Mammary epithelial cell (primary cell): ENCODE measurements at regions of chr1 and their contacts with region 1.

Region 1: DNA sequence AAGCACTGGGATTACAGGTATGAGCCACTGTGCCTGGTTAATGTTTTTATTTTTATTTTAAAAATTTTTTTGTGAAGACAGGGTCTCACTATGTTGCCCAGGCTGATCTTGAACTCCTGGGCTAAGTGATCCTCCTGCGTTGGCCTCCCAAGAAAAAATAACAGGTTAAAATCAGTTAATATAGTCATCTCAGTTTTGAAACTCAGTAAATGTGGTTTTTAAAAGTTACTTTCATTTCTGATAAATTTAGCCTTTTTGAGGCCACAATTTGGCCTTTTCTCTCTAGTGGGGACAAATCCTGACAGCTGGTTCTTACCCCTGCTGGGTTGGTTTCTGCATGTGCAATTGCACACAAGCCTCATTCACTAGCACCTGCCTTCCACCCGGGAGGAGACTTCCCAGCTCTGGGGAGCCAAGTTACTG is 13.3 kb downstream of the PMF1 start:
- DNase-seq: no peak
- H3K4me3 ChIP-seq: no peak overlapping the region
- H3K27ac ChIP-seq: no peak overlapping the region
- H3K4me1 ChIP-seq: peaks cover 12% of the 10 kb centered on the region
- H3K27me3 ChIP-seq: no peaks in the 10 kb centered on the region
- CTCF ChIP-seq: no peak

Region 2: DNA sequence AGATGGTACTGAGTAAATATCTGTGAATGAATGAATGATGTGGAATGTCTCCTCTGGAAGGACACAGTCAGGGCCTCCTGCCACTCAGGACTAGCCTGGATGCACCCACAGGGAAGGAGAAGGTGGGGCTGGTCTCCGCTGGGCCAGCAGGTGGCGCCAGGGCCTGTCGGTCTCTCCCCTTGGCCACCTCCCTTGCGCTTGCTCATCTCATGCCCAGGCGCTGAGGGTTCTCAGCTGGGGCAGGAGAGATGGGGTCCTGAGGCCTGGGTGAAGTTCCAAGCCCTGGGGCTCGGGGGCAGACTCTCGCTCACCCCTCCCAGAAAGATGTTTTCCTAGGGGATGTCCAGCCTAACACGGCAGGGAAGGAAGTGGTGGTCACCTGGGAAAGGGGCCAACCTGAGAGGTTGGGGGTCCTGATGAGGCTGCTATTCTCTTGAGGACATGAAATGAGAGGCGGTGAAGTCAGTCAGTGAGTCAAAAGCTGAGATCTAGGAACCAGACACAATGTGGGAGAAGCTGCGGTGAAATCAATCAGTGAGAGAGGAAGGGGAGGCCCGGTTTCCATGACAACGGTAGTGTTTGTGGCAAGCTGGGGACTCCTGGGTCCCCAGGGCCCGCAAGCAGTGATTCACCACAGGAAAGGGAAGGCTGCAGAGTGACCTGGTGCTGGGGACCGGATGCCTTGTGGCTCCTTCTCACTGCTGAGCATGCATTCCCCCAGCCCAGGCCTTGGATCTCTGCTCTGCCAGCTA is 129.3 kb before region 1 on chr1:
- CTCF ChIA-PET with region 1: interaction called, 6 read pairs
- dilution Hi-C with region 1: loop called (anchors 5 kb)
- in situ Hi-C with region 1: loop called (anchors 5 kb)
- intact Hi-C with region 1: loop called (anchors 1 kb)
- DNase-seq: peak; percentile 77
- H3K4me3 ChIP-seq: no peak overlapping the region
- H3K27ac ChIP-seq: peak overlapping the region; percentile 49
- H3K4me1 ChIP-seq: peaks cover 33% of the 10 kb centered on the region
- H3K27me3 ChIP-seq: no peaks in the 10 kb centered on the region
- CTCF ChIP-seq: peak; percentile 96 to 100

Region 3: DNA sequence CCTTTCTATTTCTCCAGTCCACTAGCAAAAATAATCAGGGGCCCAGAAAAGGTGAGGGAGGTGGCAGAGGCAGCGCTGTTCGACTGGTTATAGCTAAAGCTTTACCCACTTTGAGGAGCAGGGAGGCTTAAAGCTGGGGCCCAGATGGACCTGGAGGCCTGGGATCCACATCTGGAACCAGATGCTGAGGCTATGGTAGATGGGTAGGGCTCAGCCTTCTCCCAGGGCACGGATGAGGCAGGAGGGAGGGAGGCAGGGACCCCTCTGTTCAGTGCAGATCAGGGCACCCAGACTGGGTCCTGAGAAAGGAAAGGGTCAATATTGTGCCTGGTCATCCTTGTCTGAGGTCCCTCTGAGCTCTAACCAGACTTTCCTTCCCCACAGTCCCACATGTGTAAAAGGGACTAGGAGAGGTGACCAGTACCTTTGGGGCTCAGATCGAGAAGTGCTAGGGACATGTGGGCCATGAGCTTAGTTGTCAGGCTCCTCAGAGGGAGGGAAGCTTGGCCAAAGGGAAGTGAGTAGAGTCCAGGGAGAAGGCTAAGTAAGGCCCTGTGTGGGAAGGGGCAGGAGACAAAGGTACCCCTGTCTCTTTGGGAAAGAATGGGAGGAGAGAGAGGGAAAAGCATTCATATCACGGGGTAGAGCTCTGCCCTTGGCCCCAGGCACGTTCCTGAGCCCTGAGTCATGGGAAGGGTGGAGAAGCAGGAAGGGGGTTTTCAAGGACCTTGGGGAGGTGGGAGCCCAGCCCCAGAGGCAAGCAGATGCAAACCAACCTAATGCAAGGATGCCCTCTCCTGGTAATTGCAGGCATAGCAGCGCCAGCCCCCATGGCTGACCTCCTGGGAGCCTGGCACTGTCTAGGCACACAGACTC is 96.2 kb before region 1 on chr1:
- CTCF ChIA-PET with region 1: no interaction called
- dilution Hi-C with region 1: loop called (anchors 5 kb)
- in situ Hi-C with region 1: no loop called
- intact Hi-C with region 1: loop called (anchors 5 kb)
- DNase-seq: peak; percentile 96
- H3K4me3 ChIP-seq: no peak overlapping the region
- H3K27ac ChIP-seq: peak overlapping the region; percentile 95
- H3K4me1 ChIP-seq: peaks cover 54% of the 10 kb centered on the region
- H3K27me3 ChIP-seq: no peaks in the 10 kb centered on the region
- CTCF ChIP-seq: peak; percentile 96 to 97

Region 4: DNA sequence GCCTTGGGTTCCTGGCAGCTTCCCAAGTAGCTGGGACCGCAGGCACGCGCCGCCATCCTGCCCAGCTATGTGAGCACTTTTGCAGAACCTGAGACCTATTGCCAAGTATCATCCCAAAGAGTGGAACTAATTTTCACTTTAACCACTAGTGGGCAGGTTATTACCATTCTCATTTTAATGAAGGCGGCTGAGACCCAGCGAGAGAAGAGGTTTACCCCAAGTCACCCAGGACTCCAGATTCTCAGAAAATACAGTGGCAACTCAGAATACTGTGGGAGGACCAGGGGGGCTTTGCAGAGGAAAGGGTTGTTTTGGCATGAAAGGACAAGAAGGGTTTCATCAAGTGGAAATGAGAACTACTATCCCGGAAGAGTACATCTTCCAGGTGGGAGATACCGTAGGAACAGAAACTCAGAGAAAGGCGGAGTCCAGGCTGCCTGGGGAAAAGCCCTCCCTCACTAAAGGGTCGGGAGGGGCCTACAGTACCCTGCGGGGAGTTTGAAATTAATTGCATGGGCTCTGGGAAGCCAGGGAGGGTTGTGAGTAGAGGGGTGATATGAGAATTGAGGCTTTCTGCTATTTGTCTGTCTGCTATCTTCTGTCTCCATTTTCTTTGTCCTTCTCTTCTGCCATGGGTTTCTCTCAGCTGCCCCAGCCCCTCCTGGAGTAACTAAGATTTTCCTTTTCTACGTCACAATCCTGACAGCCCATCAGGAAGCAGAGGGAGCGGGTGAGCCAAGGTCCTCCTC is 79.9 kb before region 1 on chr1:
- CTCF ChIA-PET with region 1: interaction called, 21 read pairs
- dilution Hi-C with region 1: no loop called
- in situ Hi-C with region 1: loop called (anchors 5 to 10 kb)
- intact Hi-C with region 1: loop called (anchors 1 kb)
- DNase-seq: peak; percentile 93
- H3K4me3 ChIP-seq: no peak overlapping the region
- H3K27ac ChIP-seq: no peak overlapping the region
- H3K4me1 ChIP-seq: peaks cover 10% of the 10 kb centered on the region
- H3K27me3 ChIP-seq: no peaks in the 10 kb centered on the region
- CTCF ChIP-seq: peak; percentile 67 to 74

Region 5: DNA sequence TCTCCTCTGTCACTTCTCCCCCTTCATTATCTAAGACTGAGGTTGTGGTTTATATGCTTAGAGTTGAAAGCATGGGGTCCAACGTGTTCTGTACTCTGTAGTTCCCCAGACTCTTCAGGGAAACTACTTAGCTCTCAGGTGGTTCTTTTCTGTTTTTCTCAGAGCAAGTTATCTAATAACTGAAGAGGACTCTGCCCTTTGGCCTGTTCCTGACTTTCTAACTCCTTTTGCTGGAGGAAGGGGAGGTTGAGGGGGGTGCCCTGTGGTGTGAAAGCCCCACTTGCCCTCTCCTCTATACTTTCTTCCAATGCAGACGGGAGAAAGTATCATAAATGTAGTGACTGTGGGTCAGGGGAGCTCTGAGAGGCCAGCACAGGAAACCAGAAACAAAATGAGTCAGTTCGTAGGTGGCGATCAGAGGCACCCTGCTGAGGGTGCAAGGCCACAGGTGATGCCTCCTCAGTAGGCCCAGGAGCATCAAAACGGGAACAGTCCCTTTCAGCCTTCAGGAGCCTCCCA is 27.2 kb before region 1 on chr1:
- CTCF ChIA-PET with region 1: no interaction called
- dilution Hi-C with region 1: no loop called
- in situ Hi-C with region 1: no loop called
- intact Hi-C with region 1: no loop called
- DNase-seq: no peak
- H3K4me3 ChIP-seq: no peak overlapping the region
- H3K27ac ChIP-seq: no peak overlapping the region
- H3K4me1 ChIP-seq: peaks cover 5% of the 10 kb centered on the region
- H3K27me3 ChIP-seq: no peaks in the 10 kb centered on the region
- CTCF ChIP-seq: no peak

Region 6: GRCh38 chr1:156262461-156263287 is 36.5 kb after region 1 on chr1:
- CTCF ChIA-PET with region 1: interaction called, 14 read pairs
- dilution Hi-C with region 1: no loop called
- in situ Hi-C with region 1: no loop called
- intact Hi-C with region 1: no loop called
- DNase-seq: peak; percentile 91
- H3K4me3 ChIP-seq: no peak overlapping the region
- H3K27ac ChIP-seq: peak overlapping the region; percentile 81
- H3K4me1 ChIP-seq: peaks cover 65% of the 10 kb centered on the region
- H3K27me3 ChIP-seq: no peaks in the 10 kb centered on the region
- CTCF ChIP-seq: no peak